ENCODE measurements at regions of chr10 and their contacts with region 1.

Region 1: GRCh38 chr10:119070395-119071165 is 10.0 kb downstream of the EIF3A start:
- DNase-seq: no peak
- H3K4me3 Mint-ChIP-seq: no peak overlapping the region
- H3K27ac Mint-ChIP-seq: no peak overlapping the region
- H3K4me1 Mint-ChIP-seq: peaks cover 24% of the 10 kb centered on the region
- H3K27me3 Mint-ChIP-seq: no peaks in the 10 kb centered on the region

Region 2: DNA sequence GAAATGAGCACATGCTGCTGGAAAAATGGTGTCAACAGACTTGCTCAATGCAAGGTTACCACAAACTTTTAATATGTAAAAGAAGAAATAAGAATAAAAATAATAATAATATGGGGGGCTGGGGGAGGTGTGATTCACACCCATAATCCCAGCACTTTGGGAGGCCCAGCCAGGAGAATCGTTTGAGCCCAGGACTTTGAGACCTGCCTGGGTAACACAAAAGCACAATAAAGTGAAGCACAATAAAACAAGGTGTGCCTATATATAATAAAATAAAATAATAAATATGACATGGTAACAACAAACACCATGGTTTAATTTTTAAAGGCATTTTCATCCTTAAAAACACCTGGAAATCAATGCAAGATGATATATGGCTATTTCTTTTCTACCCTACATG is 15.1 kb before region 1 on chr10:
- CTCF ChIA-PET with region 1: no interaction called
- intact Hi-C with region 1: loop called (anchors 2 kb)
- DNase-seq: no peak
- H3K4me3 Mint-ChIP-seq: no peak overlapping the region
- H3K27ac Mint-ChIP-seq: no peak overlapping the region
- H3K4me1 Mint-ChIP-seq: no peaks in the 10 kb centered on the region
- H3K27me3 Mint-ChIP-seq: no peaks in the 10 kb centered on the region

Region 3: GRCh38 chr10:119849031-119849789 is 778.6 kb after region 1 on chr10:
- CTCF ChIA-PET with region 1: no interaction called
- intact Hi-C with region 1: no loop called
- DNase-seq: no peak
- H3K4me3 Mint-ChIP-seq: no peak overlapping the region
- H3K27ac Mint-ChIP-seq: no peak overlapping the region
- H3K4me1 Mint-ChIP-seq: peaks cover 2% of the 10 kb centered on the region
- H3K27me3 Mint-ChIP-seq: no peaks in the 10 kb centered on the region